Gastrocnemius medialis (tissue), 4 donors: ENCODE measurements at regions of chr1 and their contacts with region 1.

Region 1: DNA sequence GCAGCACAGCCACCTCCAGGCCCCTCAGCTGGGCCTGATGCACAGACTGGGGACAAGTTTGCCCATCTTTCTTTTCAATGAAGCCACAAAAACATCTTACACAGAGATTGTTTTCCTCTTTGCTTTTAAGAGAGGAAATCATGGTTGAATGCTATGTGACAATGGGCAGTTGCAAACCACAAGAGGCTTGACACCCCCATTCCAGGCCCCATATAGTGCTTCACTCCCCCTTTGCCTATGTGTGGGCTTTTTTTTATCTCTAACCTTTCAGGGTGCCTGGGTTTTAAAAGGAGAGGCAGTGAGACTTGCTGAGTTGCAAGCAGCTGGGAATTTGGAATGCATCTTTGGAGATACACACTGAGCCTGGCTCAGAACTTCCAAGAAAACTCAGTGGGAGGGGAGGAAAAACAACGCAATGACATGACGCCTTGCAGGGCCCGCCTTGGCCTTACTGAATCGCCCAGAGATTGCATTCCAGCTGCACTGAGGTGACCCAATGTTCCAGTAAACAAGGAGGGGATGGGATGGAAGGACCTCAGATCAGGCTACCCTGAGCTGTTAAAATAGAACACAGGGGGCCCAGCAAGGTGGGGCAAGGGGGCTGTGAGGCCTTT is 145.2 kb upstream of the ZNF648 start:
- DNase-seq: peak; percentile 80 to 92
- ATAC-seq: peak; percentile 76 to 83
- H3K4me3 ChIP-seq: no peak overlapping the region
- H3K27ac ChIP-seq: peak overlapping the region; percentile 74 to 93 (median 87)
- H3K4me1 ChIP-seq: peaks cover 25 to 29% of the 10 kb centered on the region in 2 donors
- H3K27me3 ChIP-seq: no peaks in the 10 kb centered on the region
- CTCF ChIP-seq: no peak
- POLR2A ChIP-seq: peak; percentile 36 to 68

Region 2: DNA sequence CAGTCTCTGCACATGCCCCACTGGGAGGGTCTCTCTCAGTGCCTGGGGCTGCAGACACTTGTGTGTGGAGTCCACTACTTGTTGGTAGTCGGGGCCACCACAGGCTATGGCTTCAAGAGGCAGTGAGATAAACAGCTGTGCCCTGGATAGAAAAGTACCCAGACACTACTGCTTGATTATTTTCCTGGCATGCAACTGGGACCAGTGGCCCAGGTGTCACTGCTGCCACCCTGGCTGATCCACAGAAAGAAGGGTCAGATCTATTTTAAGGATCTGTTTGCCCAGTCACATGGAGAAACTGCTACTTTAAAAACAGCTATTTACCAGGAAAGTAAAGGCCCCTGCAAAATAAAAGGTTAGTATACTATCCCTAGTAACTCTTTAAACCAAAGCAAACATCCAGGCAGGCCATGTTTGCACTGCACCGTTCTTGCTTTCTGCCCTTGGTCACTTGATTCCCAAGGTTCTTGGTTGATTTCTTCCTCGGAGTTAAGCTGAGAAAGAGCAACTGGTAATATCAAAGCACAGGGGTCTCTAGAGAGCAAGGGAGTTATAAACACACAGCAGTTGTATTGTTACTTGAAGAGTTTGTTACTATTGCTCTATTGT is 85.0 kb after region 1 on chr1:
- in situ Hi-C with region 1: no loop called
- intact Hi-C with region 1: loop called (anchors 2 kb)
- DNase-seq: peak; percentile 72 to 78
- ATAC-seq: peak; percentile 37 to 54
- H3K4me3 ChIP-seq: peak overlapping the region in 1 of 4 donors; percentile 2
- H3K27ac ChIP-seq: peak overlapping the region; percentile 85 to 94 (median 90)
- H3K4me1 ChIP-seq: peaks cover 45 to 53% of the 10 kb centered on the region in 2 donors
- H3K27me3 ChIP-seq: no peaks in the 10 kb centered on the region
- CTCF ChIP-seq: no peak
- POLR2A ChIP-seq: peak; percentile 30 to 49

Region 3: GRCh38 chr1:182363636-182364035 is 156.9 kb after region 1 on chr1:
- in situ Hi-C with region 1: no loop called
- intact Hi-C with region 1: loop called (anchors 1 kb)
- DNase-seq: no peak
- ATAC-seq: no peak
- H3K4me3 ChIP-seq: no peak overlapping the region
- H3K27ac ChIP-seq: peak overlapping the region; percentile 91 to 100 (median 95)
- H3K4me1 ChIP-seq: peaks cover 24 to 30% of the 10 kb centered on the region in 2 donors
- H3K27me3 ChIP-seq: no peaks in the 10 kb centered on the region
- CTCF ChIP-seq: no peak
- POLR2A ChIP-seq: no peak